Heart left ventricle (tissue), 16 donors: ENCODE measurements at regions of chr14 and their contacts with region 1.

Region 1: GRCh38 chr14:105527661-105528581 is 1.5 kb downstream of the TMEM121 start:
- DNase-seq: peak; percentile 74 to 91 (median 85)
- ATAC-seq: peak; percentile 59 to 83 (median 70)
- H3K4me3 ChIP-seq: peak overlapping the region; percentile 45 to 77 (median 70)
- H3K27ac ChIP-seq: peak overlapping the region in 11 of 12 donors; percentile 24 to 78 (median 67)
- H3K4me1 ChIP-seq: peaks cover 11 to 41% (median 27%) of the 10 kb centered on the region in 12 donors
- H3K27me3 ChIP-seq: peaks cover 0 to 28% (median 0%) of the 10 kb centered on the region in 9 donors
- CTCF ChIP-seq: peak; percentile 71 to 96 (median 90)
- POLR2A ChIP-seq: peak in 1 of 2 donors; percentile 40

Region 2: GRCh38 chr14:105369653-105370040 is 158.3 kb before region 1 on chr14:
- intact Hi-C with region 1: loop called (anchors 2 to 5 kb)
- DNase-seq: no peak
- ATAC-seq: no peak
- H3K4me3 ChIP-seq: no peak overlapping the region
- H3K27ac ChIP-seq: no peak overlapping the region
- H3K4me1 ChIP-seq: peaks cover 0 to 6% (median 0%) of the 10 kb centered on the region in 12 donors
- H3K27me3 ChIP-seq: no peaks in the 10 kb centered on the region
- CTCF ChIP-seq: no peak
- POLR2A ChIP-seq: no peak

Region 3: GRCh38 chr14:105375635-105376057 is 152.3 kb before region 1 on chr14:
- intact Hi-C with region 1: loop called (anchors 2 to 5 kb)
- DNase-seq: no peak
- ATAC-seq: no peak
- H3K4me3 ChIP-seq: no peak overlapping the region
- H3K27ac ChIP-seq: no peak overlapping the region
- H3K4me1 ChIP-seq: peaks cover 0 to 6% (median 0%) of the 10 kb centered on the region in 12 donors
- H3K27me3 ChIP-seq: no peaks in the 10 kb centered on the region
- CTCF ChIP-seq: no peak
- POLR2A ChIP-seq: no peak

Region 4: DNA sequence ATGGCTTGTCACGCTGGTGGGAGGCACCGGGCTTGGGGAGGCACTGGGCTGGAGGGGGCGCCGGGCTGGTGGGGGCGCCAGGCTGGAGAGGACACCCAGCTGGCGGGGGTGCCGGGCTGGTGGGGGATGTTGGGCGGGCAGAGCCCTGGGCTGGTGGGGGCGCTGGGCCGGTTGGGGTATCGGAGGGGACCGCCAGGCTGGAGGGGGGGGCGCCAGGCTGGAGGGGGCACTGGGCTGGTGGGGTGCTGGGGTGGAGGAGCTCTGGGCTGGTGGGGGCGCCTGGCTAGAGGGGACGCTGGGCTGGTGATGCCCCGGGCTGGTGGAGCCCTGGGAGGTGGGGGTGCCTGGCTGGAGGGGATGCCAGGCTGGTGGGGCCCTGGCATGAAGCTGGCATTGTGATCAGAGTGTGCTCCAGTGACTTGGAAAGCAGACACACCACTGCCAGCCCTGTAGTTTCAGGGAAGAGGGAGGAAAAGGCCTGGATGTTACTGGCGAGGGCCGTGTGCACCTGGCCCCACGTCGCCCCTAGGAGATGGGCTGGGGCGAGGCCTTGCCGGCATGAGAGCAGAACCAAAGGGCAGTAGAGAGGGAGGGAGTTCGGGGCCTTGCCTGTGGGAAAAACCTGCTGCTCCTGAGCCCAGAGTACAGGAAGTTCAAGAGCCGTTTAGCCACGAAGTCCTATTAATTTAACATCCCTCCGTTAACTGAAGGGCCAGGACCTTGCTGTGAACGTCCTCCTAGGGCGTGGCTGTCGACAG is 23.8 kb before region 1 on chr14:
- intact Hi-C with region 1: no loop called
- DNase-seq: no peak
- ATAC-seq: no peak
- H3K4me3 ChIP-seq: no peak overlapping the region
- H3K27ac ChIP-seq: no peak overlapping the region
- H3K4me1 ChIP-seq: no peaks in the 10 kb centered on the region
- H3K27me3 ChIP-seq: peaks cover 0 to 14% (median 0%) of the 10 kb centered on the region in 9 donors
- CTCF ChIP-seq: no peak
- POLR2A ChIP-seq: no peak